Panc1 (cell line): ENCODE measurements at regions of chr7 and their contacts with region 1.

Region 1: GRCh38 chr7:121337398-121337797 is 8.6 kb downstream of the WNT16 start:
- DNase-seq: no peak
- ATAC-seq: peak; percentile 89
- H3K4me3 ChIP-seq: no peak overlapping the region
- H3K27ac ChIP-seq: no peak overlapping the region
- H3K4me1 ChIP-seq: no peaks in the 10 kb centered on the region
- H3K27me3 ChIP-seq: peaks cover 33% of the 10 kb centered on the region
- CTCF ChIP-seq: peak; percentile 36; the same call in 1 of the 2 replicates

Region 2: DNA sequence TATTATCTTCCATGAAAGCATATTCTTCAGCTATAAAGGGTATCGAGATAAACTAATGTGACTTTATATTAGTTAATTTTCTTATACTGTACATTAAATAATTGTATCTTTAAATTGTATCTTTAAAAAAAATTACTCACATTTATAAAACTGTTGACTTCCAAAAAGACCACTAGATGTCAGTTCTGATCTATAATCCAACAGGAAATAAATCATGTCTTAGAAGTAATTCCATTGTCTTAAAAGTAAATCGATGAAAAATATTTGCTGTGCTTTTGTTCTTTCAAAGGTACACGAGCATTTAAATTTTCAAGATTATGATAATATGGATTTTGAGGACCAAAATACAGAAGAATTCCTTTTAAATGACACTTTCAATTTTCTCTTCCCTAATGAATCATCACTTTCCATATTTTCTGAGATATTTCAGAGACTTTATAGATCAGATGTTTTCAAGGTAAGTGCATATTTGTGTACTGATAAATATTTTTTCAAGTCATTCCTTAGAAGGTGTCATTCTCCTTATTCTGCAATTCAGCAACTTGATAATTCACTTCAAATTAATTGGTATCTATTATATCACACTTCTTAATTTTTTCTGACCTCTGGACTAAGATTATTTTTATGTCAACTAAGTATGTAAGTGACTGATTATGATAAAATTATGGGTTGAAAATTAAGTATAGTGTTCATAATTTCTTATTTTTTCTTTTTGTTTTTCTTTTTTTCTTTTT is 210.4 kb before region 1 on chr7:
- CTCF ChIA-PET with region 1: no interaction called
- POLR2A ChIA-PET with region 1: no interaction called
- in situ Hi-C with region 1: no loop called
- intact Hi-C with region 1: loop called (anchors 5 kb)
- DNase-seq: peak; percentile 25
- ATAC-seq: no peak
- H3K4me3 ChIP-seq: no peak overlapping the region
- H3K27ac ChIP-seq: no peak overlapping the region
- H3K4me1 ChIP-seq: no peaks in the 10 kb centered on the region
- H3K27me3 ChIP-seq: no peaks in the 10 kb centered on the region
- CTCF ChIP-seq: peak; percentile 28; the same call in 1 of the 2 replicates